A549 (cell line): ENCODE measurements at regions of chr3 and their contacts with region 1.

Region 1: DNA sequence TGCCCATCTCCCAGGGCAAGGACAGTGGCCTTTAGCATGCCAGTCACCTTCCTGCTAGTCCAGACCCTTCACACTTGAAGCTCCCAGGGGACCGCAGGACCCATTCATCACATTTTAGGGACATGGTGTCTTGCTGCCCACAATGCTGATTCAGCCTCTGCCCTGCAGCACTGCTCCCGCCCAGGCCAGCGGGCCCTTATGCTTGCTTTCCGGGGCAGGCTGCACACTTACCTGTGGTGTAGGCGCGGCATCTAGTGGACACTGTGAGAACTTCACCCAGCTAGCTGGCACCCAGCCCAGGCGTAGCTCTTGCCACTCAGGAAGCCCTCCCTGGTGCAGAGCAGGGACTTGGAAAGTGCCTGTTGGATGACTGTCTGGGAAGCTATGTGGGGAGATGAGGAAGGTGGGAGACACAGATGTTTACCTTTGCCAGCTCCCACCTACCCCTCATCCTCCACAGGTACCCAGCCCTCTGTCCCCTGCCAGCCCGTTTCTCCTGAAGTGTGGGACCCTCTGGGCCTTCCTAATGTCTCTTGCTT is 26.2 kb upstream of the NR2C2 start:
- DNase-seq: peak; percentile 75 to 81
- ATAC-seq: peak; percentile 84 to 88
- H3K4me3 ChIP-seq: no peak overlapping the region
- H3K27ac ChIP-seq: no peak overlapping the region
- H3K4me1 ChIP-seq: no peaks in the 10 kb centered on the region
- CTCF ChIP-seq: peak; percentile 95
- EP300 ChIP-seq: no peak
- POLR2A ChIP-seq: no peak
- RAD21 ChIP-seq: peak; percentile 97

Region 2: DNA sequence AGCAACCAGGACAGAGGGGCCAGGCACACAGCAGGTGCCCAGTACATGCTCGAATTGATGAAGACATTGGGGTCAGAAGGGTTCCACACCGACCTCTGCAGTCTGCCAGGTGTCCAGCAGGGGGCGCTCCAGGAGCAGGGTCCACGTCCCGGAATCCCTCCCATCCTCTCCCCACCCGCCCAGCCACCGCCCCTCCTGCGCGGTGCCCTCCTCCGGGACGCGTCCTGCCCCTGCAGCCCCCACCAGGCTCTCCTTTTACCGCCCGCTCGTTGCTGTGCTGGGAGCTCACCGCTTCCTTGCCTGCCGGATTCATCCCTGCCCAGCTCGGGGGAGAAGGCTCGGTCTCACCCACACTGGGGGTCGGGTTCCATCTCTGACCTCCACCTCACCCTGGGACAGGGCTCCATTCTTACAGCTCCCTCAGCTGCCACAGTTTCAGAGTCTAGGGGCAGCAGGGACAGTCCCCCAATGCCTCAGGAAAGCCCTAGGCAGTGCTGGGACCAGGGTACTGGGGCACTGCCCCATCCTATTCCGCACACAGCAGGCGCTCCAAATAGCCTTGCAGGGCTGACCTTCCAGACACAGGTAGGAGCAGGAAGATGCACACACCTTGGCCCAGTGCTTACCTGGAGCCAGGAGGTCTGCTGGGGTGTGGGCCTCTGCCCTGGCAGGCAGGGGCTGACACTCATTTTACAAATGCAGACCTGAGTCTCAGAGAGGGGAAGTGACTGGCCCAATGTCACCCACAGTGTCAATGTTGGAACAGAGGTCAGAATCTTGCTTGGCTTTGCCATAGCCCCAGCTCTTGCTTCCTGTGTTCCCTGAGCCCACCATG is 412.0 kb before region 1 on chr3:
- CTCF ChIA-PET with region 1: interaction called, 48 read pairs
- POLR2A ChIA-PET with region 1: no interaction called
- DNase-seq: peak; percentile 48 to 81
- ATAC-seq: peak; percentile 69 to 87
- H3K4me3 ChIP-seq: no peak overlapping the region
- H3K27ac ChIP-seq: peak overlapping the region in 1 of 2 experiments; percentile 31; a peak in 1 of 6 replicates
- H3K4me1 ChIP-seq: no peaks in the 10 kb centered on the region
- CTCF ChIP-seq: peak; percentile 92
- EP300 ChIP-seq: no peak
- POLR2A ChIP-seq: no peak
- RAD21 ChIP-seq: peak; percentile 80 to 91

Region 3: GRCh38 chr3:14680716-14681115 is 240.4 kb before region 1 on chr3:
- CTCF ChIA-PET with region 1: interaction called, 119 read pairs
- POLR2A ChIA-PET with region 1: no interaction called
- DNase-seq: no peak
- ATAC-seq: no peak
- H3K4me3 ChIP-seq: no peak overlapping the region
- H3K27ac ChIP-seq: no peak overlapping the region
- H3K4me1 ChIP-seq: no peaks in the 10 kb centered on the region
- CTCF ChIP-seq: no peak
- EP300 ChIP-seq: no peak
- POLR2A ChIP-seq: no peak
- RAD21 ChIP-seq: no peak

Region 4: DNA sequence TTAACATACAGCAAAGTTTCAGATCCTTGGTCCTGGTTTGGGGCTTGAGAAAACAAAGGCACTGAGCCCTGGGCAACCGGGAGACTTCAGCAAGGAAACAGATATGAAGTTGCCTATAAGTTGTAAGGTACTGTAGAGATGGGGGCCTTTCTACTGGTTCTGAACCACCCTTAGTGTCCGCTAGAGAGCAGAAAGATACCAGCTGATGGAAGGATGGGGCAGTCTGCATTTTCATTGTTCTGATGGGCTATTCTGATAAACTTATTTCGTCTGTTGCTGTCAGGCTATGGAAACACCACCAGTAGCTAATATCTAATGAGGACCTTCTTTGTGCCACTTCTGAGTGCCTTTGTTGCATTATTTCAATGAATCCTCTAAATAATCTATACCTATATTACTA is 63.6 kb before region 1 on chr3:
- CTCF ChIA-PET with region 1: interaction called, 20 read pairs
- POLR2A ChIA-PET with region 1: no interaction called
- DNase-seq: peak in 1 of 2 experiments; percentile 29
- ATAC-seq: peak; percentile 51 to 78; a peak in 3 of 6 replicates
- H3K4me3 ChIP-seq: no peak overlapping the region
- H3K27ac ChIP-seq: no peak overlapping the region
- H3K4me1 ChIP-seq: no peaks in the 10 kb centered on the region
- CTCF ChIP-seq: no peak
- EP300 ChIP-seq: no peak
- POLR2A ChIP-seq: no peak
- RAD21 ChIP-seq: peak; percentile 34 to 39; a peak in 1 of 5 replicates

Region 5: DNA sequence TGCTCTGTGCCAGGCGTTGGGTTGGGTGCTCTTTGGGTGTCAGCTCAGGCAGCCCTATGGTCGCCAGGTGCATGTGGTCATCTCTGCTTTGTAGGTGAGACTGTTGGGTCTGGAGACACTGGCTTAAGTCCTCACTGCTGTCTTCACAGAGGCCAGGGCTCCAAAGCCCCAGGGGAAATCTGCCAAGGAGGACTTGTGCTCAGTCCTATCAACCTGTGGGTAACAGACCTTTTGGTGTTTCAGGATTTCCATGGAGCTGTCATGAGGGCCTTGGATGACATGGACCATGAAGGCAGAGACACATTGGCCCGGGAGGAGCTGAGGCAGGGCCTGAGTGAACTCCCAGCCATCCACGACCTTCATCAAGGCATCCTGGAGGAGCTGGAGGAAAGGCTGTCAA is 23.9 kb before region 1 on chr3:
- CTCF ChIA-PET with region 1: interaction called, 15 read pairs
- POLR2A ChIA-PET with region 1: no interaction called
- DNase-seq: no peak
- ATAC-seq: no peak
- H3K4me3 ChIP-seq: no peak overlapping the region
- H3K27ac ChIP-seq: no peak overlapping the region
- H3K4me1 ChIP-seq: no peaks in the 10 kb centered on the region
- CTCF ChIP-seq: no peak
- EP300 ChIP-seq: no peak
- POLR2A ChIP-seq: no peak
- RAD21 ChIP-seq: no peak

Region 6: GRCh38 chr3:14943042-14943441 is 21.9 kb after region 1 on chr3:
- CTCF ChIA-PET with region 1: interaction called, 17 read pairs
- POLR2A ChIA-PET with region 1: interaction called, 3 read pairs
- DNase-seq: no peak
- ATAC-seq: no peak
- H3K4me3 ChIP-seq: no peak overlapping the region
- H3K27ac ChIP-seq: no peak overlapping the region
- H3K4me1 ChIP-seq: peaks cover 13% of the 10 kb centered on the region; the same call in 2 of the 3 replicates
- CTCF ChIP-seq: no peak
- EP300 ChIP-seq: no peak
- POLR2A ChIP-seq: no peak
- RAD21 ChIP-seq: no peak

Region 7: GRCh38 chr3:15083252-15083651 is 162.1 kb after region 1 on chr3:
- CTCF ChIA-PET with region 1: no interaction called
- POLR2A ChIA-PET with region 1: no interaction called
- DNase-seq: no peak
- ATAC-seq: no peak
- H3K4me3 ChIP-seq: no peak overlapping the region
- H3K27ac ChIP-seq: no peak overlapping the region
- H3K4me1 ChIP-seq: no peaks in the 10 kb centered on the region
- CTCF ChIP-seq: no peak
- EP300 ChIP-seq: no peak
- POLR2A ChIP-seq: no peak
- RAD21 ChIP-seq: no peak

Region 8: DNA sequence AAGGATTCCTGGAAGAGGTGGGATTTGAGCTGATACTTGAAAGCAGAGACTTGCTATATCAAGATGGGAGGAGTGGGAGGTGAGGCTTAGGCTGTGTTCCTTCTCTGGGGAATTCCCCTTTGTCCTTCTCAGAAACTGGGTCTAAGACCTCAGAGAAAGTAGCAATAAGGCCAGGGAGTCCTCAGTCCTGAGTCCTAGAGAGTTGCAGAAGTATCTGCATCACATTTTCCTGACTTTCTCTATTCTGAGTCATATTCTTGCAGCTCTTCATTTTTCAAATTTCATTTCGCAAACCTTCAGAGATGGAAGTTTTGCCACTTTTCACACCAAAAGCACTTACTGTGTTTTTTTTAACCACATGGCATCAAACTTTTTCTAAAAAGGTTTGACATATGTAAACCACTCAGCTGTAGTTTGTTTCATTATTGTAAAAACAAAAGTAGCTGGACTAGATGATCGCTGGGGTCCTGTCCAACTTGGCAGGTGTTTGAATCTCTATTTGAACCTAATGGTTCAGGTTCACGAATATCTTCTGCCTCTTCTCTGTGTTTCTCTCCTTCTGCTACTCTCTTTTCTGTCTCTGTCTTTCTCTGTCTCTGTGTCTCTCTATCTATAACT is 579.1 kb after region 1 on chr3:
- CTCF ChIA-PET with region 1: no interaction called
- POLR2A ChIA-PET with region 1: no interaction called
- DNase-seq: no peak
- ATAC-seq: no peak
- H3K4me3 ChIP-seq: no peak overlapping the region
- H3K27ac ChIP-seq: no peak overlapping the region
- H3K4me1 ChIP-seq: no peaks in the 10 kb centered on the region
- CTCF ChIP-seq: no peak
- EP300 ChIP-seq: no peak
- POLR2A ChIP-seq: no peak
- RAD21 ChIP-seq: no peak